CD4-positive, alpha-beta T cell (primary cell): ENCODE measurements at regions of chr3 and their contacts with region 1.

Region 1: DNA sequence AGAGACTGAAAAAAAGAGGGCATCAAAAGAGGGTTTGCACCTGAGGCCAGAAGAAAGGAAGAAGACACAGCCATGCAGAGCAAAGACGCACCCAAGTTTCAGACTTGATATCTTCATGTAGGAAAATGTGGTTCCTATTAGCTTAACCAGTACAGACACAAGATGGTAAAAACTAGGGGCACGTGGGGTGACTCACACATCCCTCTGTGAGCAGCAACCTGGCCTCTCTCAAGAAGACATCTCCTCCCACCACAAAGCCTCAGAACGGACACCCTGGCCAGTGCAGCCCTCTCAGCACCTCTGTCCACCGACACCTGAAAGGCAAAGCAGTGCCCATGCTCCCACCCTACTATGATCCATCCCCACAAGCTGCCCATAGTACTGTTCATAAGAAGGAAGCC is 33.3 kb downstream of the GLB1 start:
- DNase-seq: peak in 11 of 14 experiments; percentile 37 to 70 (median 51)
- ATAC-seq: peak; percentile 41
- H3K4me3 ChIP-seq: no peak overlapping the region
- H3K4me3 Mint-ChIP-seq: peak overlapping the region; percentile 69
- H3K27ac ChIP-seq: peak overlapping the region; percentile 27 to 41
- H3K27ac Mint-ChIP-seq: peak overlapping the region; percentile 94
- H3K4me1 ChIP-seq: peaks cover 63% of the 10 kb centered on the region
- H3K4me1 Mint-ChIP-seq: peaks cover 68% of the 10 kb centered on the region
- H3K27me3 ChIP-seq: no peaks in the 10 kb centered on the region
- H3K27me3 Mint-ChIP-seq: no peaks in the 10 kb centered on the region
- CTCF ChIP-seq: no peak

Region 2: GRCh38 chr3:32778389-32778788 is 285.3 kb before region 1 on chr3:
- CTCF ChIA-PET with region 1: no interaction called
- POLR2A ChIA-PET with region 1: no interaction called
- intact Hi-C with region 1: no loop called
- DNase-seq: no peak
- ATAC-seq: no peak
- H3K4me3 ChIP-seq: no peak overlapping the region
- H3K4me3 Mint-ChIP-seq: no peak overlapping the region
- H3K27ac ChIP-seq: no peak overlapping the region
- H3K27ac Mint-ChIP-seq: no peak overlapping the region
- H3K4me1 ChIP-seq: peaks cover 14% of the 10 kb centered on the region
- H3K4me1 Mint-ChIP-seq: peaks cover 4% of the 10 kb centered on the region
- H3K27me3 ChIP-seq: peaks cover 0 to 4% of the 10 kb centered on the region in 2 experiments
- H3K27me3 Mint-ChIP-seq: peaks cover 4% of the 10 kb centered on the region
- CTCF ChIP-seq: no peak

Region 3: GRCh38 chr3:33016851-33017405 is 46.7 kb before region 1 on chr3:
- CTCF ChIA-PET with region 1: no interaction called
- POLR2A ChIA-PET with region 1: interaction called, 9 read pairs
- intact Hi-C with region 1: loop called in 1 of 2 experiments (anchors 5 kb)
- DNase-seq: no peak
- ATAC-seq: no peak
- H3K4me3 ChIP-seq: no peak overlapping the region
- H3K4me3 Mint-ChIP-seq: peak overlapping the region; percentile 44
- H3K27ac ChIP-seq: peak overlapping the region in 1 of 2 donors; percentile 31
- H3K27ac Mint-ChIP-seq: peak overlapping the region; percentile 74
- H3K4me1 ChIP-seq: peaks cover 38% of the 10 kb centered on the region
- H3K4me1 Mint-ChIP-seq: peaks cover 61% of the 10 kb centered on the region
- H3K27me3 ChIP-seq: no peaks in the 10 kb centered on the region
- H3K27me3 Mint-ChIP-seq: no peaks in the 10 kb centered on the region
- CTCF ChIP-seq: no peak

Region 4: GRCh38 chr3:33023172-33024136 is 40.2 kb before region 1 on chr3:
- CTCF ChIA-PET with region 1: interaction called, 5 read pairs
- POLR2A ChIA-PET with region 1: interaction called, 9 read pairs
- intact Hi-C with region 1: loop called (anchors 1 to 5 kb)
- DNase-seq: peak in 3 of 14 experiments; percentile 63 to 70 (median 68)
- ATAC-seq: peak; percentile 93
- H3K4me3 ChIP-seq: no peak overlapping the region
- H3K4me3 Mint-ChIP-seq: peak overlapping the region; percentile 56
- H3K27ac ChIP-seq: peak overlapping the region in 1 of 2 donors; percentile 0
- H3K27ac Mint-ChIP-seq: peak overlapping the region; percentile 91
- H3K4me1 ChIP-seq: peaks cover 26% of the 10 kb centered on the region
- H3K4me1 Mint-ChIP-seq: peaks cover 63% of the 10 kb centered on the region
- H3K27me3 ChIP-seq: no peaks in the 10 kb centered on the region
- H3K27me3 Mint-ChIP-seq: no peaks in the 10 kb centered on the region
- CTCF ChIP-seq: peak; percentile 23

Region 5: DNA sequence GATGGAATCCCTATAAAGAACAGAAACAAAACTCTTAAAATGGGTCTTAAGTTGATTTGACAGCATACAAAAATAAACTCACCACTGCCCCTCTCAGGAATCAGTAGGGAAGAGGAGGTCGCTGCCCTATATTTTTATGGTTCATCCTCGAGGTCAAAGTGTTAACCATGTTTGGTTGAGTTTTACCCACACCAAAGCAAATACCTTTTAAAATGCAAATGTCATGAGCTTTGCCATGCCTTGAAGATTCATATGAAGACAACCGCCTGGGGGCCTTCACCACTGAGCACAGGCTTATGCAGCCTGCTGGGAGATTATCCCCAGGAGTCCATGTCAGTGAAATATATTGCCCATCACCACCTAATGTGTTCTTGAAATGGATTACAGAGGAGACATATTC is 32.8 kb before region 1 on chr3:
- CTCF ChIA-PET with region 1: interaction called, 16 read pairs
- POLR2A ChIA-PET with region 1: interaction called, 7 read pairs
- intact Hi-C with region 1: no loop called
- DNase-seq: peak in 6 of 14 experiments; percentile 16 to 77 (median 58)
- ATAC-seq: peak; percentile 79
- H3K4me3 ChIP-seq: no peak overlapping the region
- H3K4me3 Mint-ChIP-seq: no peak overlapping the region
- H3K27ac ChIP-seq: no peak overlapping the region
- H3K27ac Mint-ChIP-seq: peak overlapping the region; percentile 50
- H3K4me1 ChIP-seq: peaks cover 18% of the 10 kb centered on the region
- H3K4me1 Mint-ChIP-seq: peaks cover 25% of the 10 kb centered on the region
- H3K27me3 ChIP-seq: no peaks in the 10 kb centered on the region
- H3K27me3 Mint-ChIP-seq: no peaks in the 10 kb centered on the region
- CTCF ChIP-seq: peak; percentile 33

Region 6: DNA sequence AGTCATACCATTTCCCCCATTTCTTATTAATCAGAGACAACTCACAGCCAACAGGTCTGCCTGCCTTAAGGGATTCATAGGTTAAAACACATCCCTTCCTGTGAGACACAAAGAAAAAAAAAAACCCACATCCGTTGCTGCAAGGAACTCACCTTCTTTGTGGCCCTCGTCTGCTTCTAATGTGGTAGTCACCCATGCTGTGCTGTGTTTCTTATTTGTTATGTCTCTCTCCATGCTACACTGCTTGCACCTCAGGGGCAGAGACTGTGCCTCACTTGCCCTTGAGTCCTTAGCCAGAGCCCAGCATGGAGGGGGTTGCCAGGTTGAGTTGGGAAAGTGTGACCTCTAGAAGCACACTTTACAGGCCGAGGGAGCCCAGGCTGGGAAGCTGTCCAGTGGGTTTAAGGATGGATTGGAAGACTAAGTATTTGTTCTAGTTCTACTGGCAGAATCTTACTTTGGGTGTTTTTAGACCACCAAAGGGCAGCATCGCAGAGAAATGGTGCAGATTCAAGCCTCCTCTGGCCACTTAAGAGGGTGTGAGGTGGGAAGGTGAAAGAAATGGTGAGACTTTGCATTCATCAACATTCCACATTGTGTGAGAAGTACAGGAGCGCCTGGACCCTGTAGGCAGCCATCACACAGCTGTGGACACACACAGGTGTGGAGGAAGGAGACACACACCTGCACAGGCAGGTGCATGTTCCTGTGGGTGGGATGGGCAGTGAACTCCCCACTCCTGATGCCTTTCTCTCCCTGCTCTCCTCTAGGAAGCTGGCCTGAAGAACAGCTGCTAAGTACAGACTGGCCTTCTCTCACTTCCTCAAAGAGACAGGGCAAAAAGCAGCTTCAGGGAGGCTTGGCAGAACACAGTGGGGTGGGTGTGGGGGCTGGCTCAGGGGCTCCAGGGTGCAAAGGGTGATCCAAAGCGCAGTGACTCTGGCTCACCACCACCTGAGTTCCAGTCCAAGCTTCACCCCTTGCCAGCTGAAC is 15.5 kb before region 1 on chr3:
- CTCF ChIA-PET with region 1: interaction called, 39 read pairs
- POLR2A ChIA-PET with region 1: interaction called, 54 read pairs
- intact Hi-C with region 1: loop called in 1 of 2 experiments (anchors 1 kb)
- DNase-seq: peak in 13 of 14 experiments; percentile 38 to 88 (median 52)
- ATAC-seq: peak; percentile 88
- H3K4me3 ChIP-seq: peak overlapping the region; percentile 15
- H3K4me3 Mint-ChIP-seq: peak overlapping the region; percentile 82
- H3K27ac ChIP-seq: peak overlapping the region; percentile 36 to 54
- H3K27ac Mint-ChIP-seq: peak overlapping the region; percentile 85
- H3K4me1 ChIP-seq: peaks cover 65% of the 10 kb centered on the region
- H3K4me1 Mint-ChIP-seq: peaks cover 80% of the 10 kb centered on the region
- H3K27me3 ChIP-seq: no peaks in the 10 kb centered on the region
- H3K27me3 Mint-ChIP-seq: no peaks in the 10 kb centered on the region
- CTCF ChIP-seq: no peak